Activated CD4-positive, alpha-beta T cell treated with anti-CD3 and anti-CD28 coated beads for 36 hours (primary cell): ENCODE measurements at regions of chrX and their contacts with region 1.

Region 1: GRCh38 chrX:77910108-77910840 is at the start of gene ATP7A:
- DNase-seq: peak; percentile 94
- ATAC-seq: peak; percentile 94
- H3K4me3 Mint-ChIP-seq: peak within 1 kb of the TSS; percentile 85
- H3K27ac Mint-ChIP-seq: peak within 1 kb of the TSS; percentile 99
- H3K4me1 Mint-ChIP-seq: peaks cover 13% of the 10 kb centered on the region
- H3K27me3 Mint-ChIP-seq: no peaks in the 10 kb centered on the region
- total RNA-seq, gene ATP7A: 9.5 to 9.7 TPM

Region 2: GRCh38 chrX:77628294-77629025 is 281.8 kb before region 1 on chrX:
- CTCF ChIA-PET with region 1: no interaction called
- POLR2A ChIA-PET with region 1: no interaction called
- intact Hi-C with region 1: no loop called
- DNase-seq: no peak
- ATAC-seq: no peak
- H3K4me3 Mint-ChIP-seq: no peak overlapping the region
- H3K27ac Mint-ChIP-seq: no peak overlapping the region
- H3K4me1 Mint-ChIP-seq: peaks cover 9% of the 10 kb centered on the region
- H3K27me3 Mint-ChIP-seq: no peaks in the 10 kb centered on the region

Region 3: GRCh38 chrX:78024349-78025108 is 114.3 kb after region 1 on chrX:
- CTCF ChIA-PET with region 1: interaction called, 14 read pairs
- POLR2A ChIA-PET with region 1: no interaction called
- intact Hi-C with region 1: loop called (anchors 1 kb)
- DNase-seq: peak; percentile 28
- ATAC-seq: peak; percentile 65
- H3K4me3 Mint-ChIP-seq: no peak overlapping the region
- H3K27ac Mint-ChIP-seq: no peak overlapping the region
- H3K4me1 Mint-ChIP-seq: peaks cover 3% of the 10 kb centered on the region
- H3K27me3 Mint-ChIP-seq: no peaks in the 10 kb centered on the region